ENCODE measurements at regions of chr10 and their contacts with region 1.

Region 1: DNA sequence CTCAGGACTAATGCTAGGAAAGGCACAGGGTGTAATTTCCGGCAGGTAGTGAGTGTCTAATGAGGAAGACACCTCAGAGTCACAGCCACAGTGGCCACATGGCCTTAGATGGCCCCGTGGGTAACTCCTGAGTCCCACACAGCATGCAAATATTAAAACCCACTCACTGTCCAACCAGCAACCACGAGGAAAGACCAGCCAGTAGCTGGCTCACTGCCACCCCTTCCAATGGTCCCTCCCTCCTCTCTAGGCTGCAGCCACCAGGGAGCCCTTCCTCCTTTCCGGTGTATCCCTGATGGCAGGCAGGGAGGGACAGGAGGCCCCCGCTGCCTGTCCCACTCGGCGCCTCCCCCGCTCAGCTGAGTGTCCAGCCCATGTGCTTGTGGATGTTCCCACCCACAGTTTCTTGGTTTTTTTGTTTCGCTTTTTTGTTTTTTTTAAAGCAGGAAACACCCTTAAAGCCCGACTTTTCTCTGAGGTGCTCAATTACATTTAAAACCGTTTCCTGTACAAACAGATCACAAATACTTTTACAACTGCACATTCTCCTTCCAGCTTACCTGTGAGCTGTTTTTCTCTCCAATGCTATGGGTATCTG is 9.2 kb downstream of the BNIP3 start:
- DNase-seq: peak in 8 of 14 experiments; percentile 13 to 79 (median 29)
- ATAC-seq: peak; percentile 75
- H3K4me3 ChIP-seq: peak overlapping the region; percentile 54
- H3K4me3 Mint-ChIP-seq: peak overlapping the region; percentile 91
- H3K27ac ChIP-seq: peak overlapping the region; percentile 74 to 80
- H3K27ac Mint-ChIP-seq: peak overlapping the region; percentile 94
- H3K4me1 ChIP-seq: peaks cover 70% of the 10 kb centered on the region
- H3K4me1 Mint-ChIP-seq: peaks cover 67% of the 10 kb centered on the region
- H3K27me3 ChIP-seq: no peaks in the 10 kb centered on the region
- H3K27me3 Mint-ChIP-seq: no peaks in the 10 kb centered on the region
- CTCF ChIP-seq: no peak

Region 2: DNA sequence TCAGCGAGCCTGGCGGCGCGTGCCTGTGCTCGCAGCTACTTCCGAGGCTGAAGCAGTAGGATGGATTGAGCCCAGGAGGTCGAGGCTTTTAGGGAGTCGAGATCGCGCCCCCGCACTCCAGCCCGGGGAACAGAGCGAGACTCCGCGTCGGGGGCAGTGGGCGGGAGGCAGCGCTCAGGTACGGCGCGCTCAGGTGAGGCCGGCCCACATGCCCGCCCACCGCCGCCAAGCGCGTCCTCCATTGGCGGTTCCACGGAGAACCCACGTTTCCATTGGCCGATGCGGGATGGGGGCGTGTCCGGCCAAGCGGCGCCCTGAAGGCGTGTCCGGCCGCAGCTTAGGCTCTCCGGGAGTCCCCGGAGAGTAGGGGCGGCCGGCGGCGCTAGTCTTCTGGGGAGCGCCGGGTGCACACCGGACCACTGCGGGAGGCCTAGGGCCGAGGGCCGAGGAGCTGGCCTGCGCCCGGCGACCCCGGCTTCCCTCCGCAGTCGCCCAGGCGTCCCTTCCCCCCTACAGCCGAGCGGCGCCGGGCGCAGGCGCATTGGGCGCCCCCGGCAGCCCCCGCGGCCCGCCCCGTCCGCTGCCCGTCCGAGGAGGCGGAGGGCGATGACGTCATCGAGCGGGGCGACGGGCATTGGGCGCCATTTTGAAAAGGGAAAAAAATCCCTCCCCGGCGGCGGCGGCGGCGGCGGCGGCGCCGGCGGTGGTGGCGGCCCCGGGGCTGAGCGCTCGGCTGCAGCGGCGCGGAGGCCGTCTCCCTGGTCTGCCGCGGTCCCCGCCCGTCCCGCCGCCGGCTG is 72.0 kb before region 1 on chr10 and contains the start of gene PPP2R2D:
- CTCF ChIA-PET with region 1: interaction called, 3 read pairs
- POLR2A ChIA-PET with region 1: interaction called, 19 read pairs
- intact Hi-C with region 1: loop called in 1 of 2 experiments (anchors 2 kb)
- DNase-seq: peak; percentile 89 to 98 (median 95)
- ATAC-seq: peak; percentile 81
- H3K4me3 ChIP-seq: peak within 1 kb of the TSS; percentile 73
- H3K4me3 Mint-ChIP-seq: peak within 1 kb of the TSS; percentile 97
- H3K27ac ChIP-seq: peak within 1 kb of the TSS; percentile 66 to 82
- H3K27ac Mint-ChIP-seq: peak within 1 kb of the TSS; percentile 96
- H3K4me1 ChIP-seq: peaks cover 65% of the 10 kb centered on the region
- H3K4me1 Mint-ChIP-seq: peaks cover 61% of the 10 kb centered on the region
- H3K27me3 ChIP-seq: no peaks in the 10 kb centered on the region
- H3K27me3 Mint-ChIP-seq: no peaks in the 10 kb centered on the region
- CTCF ChIP-seq: no peak
- total RNA-seq, gene PPP2R2D: 32.6 to 32.9 TPM

Region 3: GRCh38 chr10:131909014-131909808 is 63.4 kb before region 1 on chr10:
- CTCF ChIA-PET with region 1: no interaction called
- POLR2A ChIA-PET with region 1: interaction called, 13 read pairs
- intact Hi-C with region 1: no loop called
- DNase-seq: peak in 1 of 14 experiments; percentile 29
- ATAC-seq: no peak
- H3K4me3 ChIP-seq: no peak overlapping the region
- H3K4me3 Mint-ChIP-seq: peak overlapping the region; percentile 86
- H3K27ac ChIP-seq: peak overlapping the region; percentile 28 to 46
- H3K27ac Mint-ChIP-seq: peak overlapping the region; percentile 96
- H3K4me1 ChIP-seq: peaks cover 76% of the 10 kb centered on the region
- H3K4me1 Mint-ChIP-seq: peaks cover 92% of the 10 kb centered on the region
- H3K27me3 ChIP-seq: no peaks in the 10 kb centered on the region
- H3K27me3 Mint-ChIP-seq: no peaks in the 10 kb centered on the region
- CTCF ChIP-seq: no peak

Region 4: GRCh38 chr10:131933016-131933695 is 39.4 kb before region 1 on chr10:
- CTCF ChIA-PET with region 1: no interaction called
- POLR2A ChIA-PET with region 1: no interaction called
- intact Hi-C with region 1: no loop called
- DNase-seq: no peak
- ATAC-seq: no peak
- H3K4me3 ChIP-seq: no peak overlapping the region
- H3K4me3 Mint-ChIP-seq: no peak overlapping the region
- H3K27ac ChIP-seq: no peak overlapping the region
- H3K27ac Mint-ChIP-seq: peak overlapping the region; percentile 78
- H3K4me1 ChIP-seq: peaks cover 50% of the 10 kb centered on the region
- H3K4me1 Mint-ChIP-seq: peaks cover 66% of the 10 kb centered on the region
- H3K27me3 ChIP-seq: no peaks in the 10 kb centered on the region
- H3K27me3 Mint-ChIP-seq: no peaks in the 10 kb centered on the region
- CTCF ChIP-seq: no peak

Region 5: DNA sequence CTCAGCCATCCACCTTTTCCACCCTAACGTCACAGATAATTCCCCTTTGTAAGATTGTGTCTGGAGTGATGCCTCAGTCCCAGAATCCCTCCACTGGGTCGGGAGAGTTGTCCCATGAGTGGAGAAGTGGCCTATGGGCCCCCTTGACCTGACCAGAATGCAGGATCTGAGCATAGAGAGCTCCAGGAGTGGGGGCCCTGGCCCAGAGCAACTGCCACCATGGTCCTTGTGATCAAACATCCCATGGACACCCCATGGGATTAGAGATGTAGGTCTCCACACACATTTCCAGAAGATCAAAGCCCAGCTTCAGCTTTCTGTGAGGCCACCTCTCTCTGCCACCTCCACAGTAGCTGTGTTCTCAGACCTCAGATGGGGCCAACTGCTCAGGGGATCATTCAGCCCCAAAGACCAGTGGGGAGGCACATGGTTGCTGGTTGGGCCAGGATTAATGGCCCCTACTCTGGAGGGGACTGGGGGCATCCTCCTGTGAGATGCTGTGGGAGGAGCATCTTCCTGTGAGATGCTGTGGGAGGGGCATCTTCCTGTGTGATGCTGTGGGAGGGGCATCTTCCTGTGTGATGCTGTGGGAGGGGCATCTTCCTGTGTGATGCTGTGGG is 185.7 kb after region 1 on chr10:
- CTCF ChIA-PET with region 1: no interaction called
- POLR2A ChIA-PET with region 1: no interaction called
- intact Hi-C with region 1: loop called in 1 of 2 experiments (anchors 10 kb)
- DNase-seq: peak in 8 of 14 experiments; percentile 23 to 81 (median 52)
- ATAC-seq: peak; percentile 42
- H3K4me3 ChIP-seq: no peak overlapping the region
- H3K4me3 Mint-ChIP-seq: no peak overlapping the region
- H3K27ac ChIP-seq: peak overlapping the region in 1 of 2 donors; percentile 87
- H3K27ac Mint-ChIP-seq: peak overlapping the region; percentile 88
- H3K4me1 ChIP-seq: peaks cover 37% of the 10 kb centered on the region
- H3K4me1 Mint-ChIP-seq: peaks cover 25% of the 10 kb centered on the region
- H3K27me3 ChIP-seq: no peaks in the 10 kb centered on the region
- H3K27me3 Mint-ChIP-seq: no peaks in the 10 kb centered on the region
- CTCF ChIP-seq: no peak

Region 6: DNA sequence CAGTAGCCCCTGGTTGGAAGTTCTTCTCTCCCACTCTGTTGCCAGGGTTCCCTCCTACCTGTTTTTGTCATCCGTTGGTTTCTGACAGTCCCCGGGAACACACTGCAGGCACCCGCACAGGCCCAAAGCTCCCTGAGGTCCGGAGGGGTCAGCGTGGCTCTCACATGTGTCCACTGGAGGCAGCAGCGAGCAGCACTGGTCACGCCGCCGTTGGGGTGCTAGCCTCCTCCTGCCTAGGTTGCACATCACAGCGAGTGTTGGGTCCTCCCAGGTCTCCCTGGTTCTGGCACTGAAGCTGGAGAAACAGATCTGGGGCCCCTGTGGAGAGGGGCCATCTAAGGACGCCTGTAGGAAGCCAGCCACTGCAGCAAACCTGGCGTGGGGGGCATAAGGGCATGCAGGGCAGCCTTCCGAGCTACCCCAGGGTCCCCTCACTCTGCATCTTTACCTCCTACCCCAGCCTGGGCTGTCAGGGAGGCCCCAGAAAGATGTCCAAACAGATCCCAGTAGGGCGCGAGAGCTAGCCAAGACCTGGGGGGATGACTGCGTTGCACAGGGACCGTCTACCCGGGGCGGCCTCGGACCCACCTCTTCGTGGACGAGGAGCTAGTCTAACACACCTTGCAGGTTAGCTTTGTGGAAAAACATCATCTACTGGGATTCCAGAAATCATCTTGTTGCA is 388.3 kb after region 1 on chr10:
- CTCF ChIA-PET with region 1: no interaction called
- POLR2A ChIA-PET with region 1: no interaction called
- intact Hi-C with region 1: no loop called
- DNase-seq: peak in 7 of 14 experiments; percentile 11 to 51 (median 42)
- ATAC-seq: no peak
- H3K4me3 ChIP-seq: no peak overlapping the region
- H3K4me3 Mint-ChIP-seq: no peak overlapping the region
- H3K27ac ChIP-seq: no peak overlapping the region
- H3K27ac Mint-ChIP-seq: no peak overlapping the region
- H3K4me1 ChIP-seq: peaks cover 7% of the 10 kb centered on the region
- H3K4me1 Mint-ChIP-seq: no peaks in the 10 kb centered on the region
- H3K27me3 ChIP-seq: no peaks in the 10 kb centered on the region
- H3K27me3 Mint-ChIP-seq: no peaks in the 10 kb centered on the region
- CTCF ChIP-seq: peak; percentile 57

Region 7: GRCh38 chr10:132788180-132788830 is 815.7 kb after region 1 on chr10:
- CTCF ChIA-PET with region 1: no interaction called
- POLR2A ChIA-PET with region 1: no interaction called
- intact Hi-C with region 1: no loop called
- DNase-seq: no peak
- ATAC-seq: no peak
- H3K4me3 ChIP-seq: no peak overlapping the region
- H3K4me3 Mint-ChIP-seq: no peak overlapping the region
- H3K27ac ChIP-seq: no peak overlapping the region
- H3K27ac Mint-ChIP-seq: no peak overlapping the region
- H3K4me1 ChIP-seq: peaks cover 7% of the 10 kb centered on the region
- H3K4me1 Mint-ChIP-seq: peaks cover 4% of the 10 kb centered on the region
- H3K27me3 ChIP-seq: peaks cover 25 to 60% of the 10 kb centered on the region in 2 experiments
- H3K27me3 Mint-ChIP-seq: peaks cover 13% of the 10 kb centered on the region
- CTCF ChIP-seq: no peak